H1 (cell line): ENCODE measurements at regions of chr10 and their contacts with region 1.

Region 1: DNA sequence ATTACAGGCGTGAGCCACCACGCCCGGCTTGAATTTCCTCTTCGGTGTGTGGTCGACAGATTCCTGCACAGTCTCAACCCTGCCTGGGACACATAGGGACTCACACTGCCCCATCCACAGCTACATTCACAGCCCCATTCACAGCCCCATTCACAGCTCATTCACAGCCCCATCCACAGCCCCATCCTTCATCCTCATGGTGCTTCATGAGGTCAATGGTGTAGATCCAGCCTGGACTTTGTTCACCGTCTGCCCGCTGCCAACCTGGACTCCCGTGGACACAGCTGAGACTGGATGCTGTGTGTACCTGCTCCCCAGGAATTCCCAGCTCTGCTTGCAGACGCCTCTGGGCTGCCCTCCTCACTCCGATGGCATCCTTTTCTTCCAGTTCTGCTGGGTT is 5.2 kb downstream of the IDI2 start:
- DNase-seq: no peak
- H3K4me3 ChIP-seq: no peak overlapping the region
- H3K27ac ChIP-seq: no peak overlapping the region
- H3K4me1 ChIP-seq: no peaks in the 10 kb centered on the region; a peak in 1 of 7 replicates
- H3K27me3 ChIP-seq: no peaks in the 10 kb centered on the region
- CTCF ChIP-seq: no peak
- EP300 ChIP-seq: no peak
- POLR2A ChIP-seq: no peak
- RAD21 ChIP-seq: no peak

Region 2: DNA sequence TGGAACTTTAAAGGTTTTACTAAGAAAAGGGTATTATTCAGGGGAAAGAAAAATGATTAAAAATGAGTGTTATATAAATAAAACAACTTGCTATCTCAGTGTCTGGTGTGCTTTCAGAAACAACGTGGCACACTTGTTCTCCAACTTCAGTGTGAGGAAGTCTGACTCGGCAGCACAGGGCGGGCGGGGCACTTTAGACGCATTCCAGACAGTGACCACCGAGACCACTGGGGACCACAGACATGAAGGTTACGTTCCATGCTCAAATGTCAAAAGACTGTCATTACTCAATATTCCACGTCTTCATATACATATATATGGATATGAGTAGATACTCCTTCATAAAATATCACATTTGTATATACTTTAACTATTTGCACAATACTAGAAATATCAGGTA is 175.9 kb before region 1 on chr10:
- CTCF ChIA-PET with region 1: no interaction called
- POLR2A ChIA-PET with region 1: no interaction called
- DNase-seq: no peak
- H3K4me3 ChIP-seq: no peak overlapping the region
- H3K27ac ChIP-seq: no peak overlapping the region
- H3K4me1 ChIP-seq: no peaks in the 10 kb centered on the region
- H3K27me3 ChIP-seq: no peaks in the 10 kb centered on the region
- CTCF ChIP-seq: no peak
- EP300 ChIP-seq: no peak
- POLR2A ChIP-seq: no peak
- RAD21 ChIP-seq: no peak

Region 3: DNA sequence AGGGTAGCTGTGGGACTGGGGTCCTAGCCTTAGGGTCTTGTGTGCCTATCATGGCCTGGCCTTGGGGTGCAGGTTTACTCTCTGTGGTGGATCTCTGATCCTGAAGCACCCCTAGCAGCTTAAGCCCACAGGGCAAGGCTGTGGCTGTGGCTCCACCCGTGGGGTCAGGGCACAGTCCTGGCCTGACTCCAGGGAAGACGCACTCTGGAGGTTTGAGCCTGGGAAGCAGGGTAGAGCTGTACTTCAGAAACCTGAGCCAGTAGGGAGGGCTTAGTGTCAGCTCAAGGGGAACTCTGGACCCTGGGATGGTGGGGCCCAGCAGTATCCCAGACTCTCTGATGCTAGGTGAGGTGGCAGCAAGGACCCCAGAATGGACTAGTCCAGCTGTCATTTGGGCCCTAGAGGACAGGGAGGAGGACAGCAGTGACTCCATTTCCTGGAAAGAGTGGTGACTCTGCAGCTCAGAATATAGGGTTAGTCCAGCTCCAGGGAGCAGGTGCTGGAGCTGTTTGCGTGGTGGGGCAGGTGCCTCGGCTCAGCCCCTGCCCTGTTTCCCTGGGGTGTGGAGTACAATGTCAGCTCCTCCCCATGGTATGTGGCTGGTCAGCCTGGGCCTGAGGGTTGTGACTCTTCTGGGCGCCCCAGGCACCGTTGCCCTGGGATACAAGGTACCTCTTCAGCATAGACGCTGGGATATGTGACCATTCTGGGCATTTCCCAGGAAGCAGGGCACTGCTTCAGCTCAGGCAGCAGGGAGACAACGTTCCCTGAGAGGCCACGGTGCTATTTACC is 16.4 kb before region 1 on chr10:
- CTCF ChIA-PET with region 1: no interaction called
- POLR2A ChIA-PET with region 1: interaction called, 10 read pairs
- DNase-seq: no peak
- H3K4me3 ChIP-seq: no peak overlapping the region
- H3K27ac ChIP-seq: no peak overlapping the region; the same call in 1 of the 2 replicates
- H3K4me1 ChIP-seq: no peaks in the 10 kb centered on the region
- H3K27me3 ChIP-seq: no peaks in the 10 kb centered on the region
- CTCF ChIP-seq: no peak
- EP300 ChIP-seq: no peak
- POLR2A ChIP-seq: no peak
- RAD21 ChIP-seq: no peak

Region 4: DNA sequence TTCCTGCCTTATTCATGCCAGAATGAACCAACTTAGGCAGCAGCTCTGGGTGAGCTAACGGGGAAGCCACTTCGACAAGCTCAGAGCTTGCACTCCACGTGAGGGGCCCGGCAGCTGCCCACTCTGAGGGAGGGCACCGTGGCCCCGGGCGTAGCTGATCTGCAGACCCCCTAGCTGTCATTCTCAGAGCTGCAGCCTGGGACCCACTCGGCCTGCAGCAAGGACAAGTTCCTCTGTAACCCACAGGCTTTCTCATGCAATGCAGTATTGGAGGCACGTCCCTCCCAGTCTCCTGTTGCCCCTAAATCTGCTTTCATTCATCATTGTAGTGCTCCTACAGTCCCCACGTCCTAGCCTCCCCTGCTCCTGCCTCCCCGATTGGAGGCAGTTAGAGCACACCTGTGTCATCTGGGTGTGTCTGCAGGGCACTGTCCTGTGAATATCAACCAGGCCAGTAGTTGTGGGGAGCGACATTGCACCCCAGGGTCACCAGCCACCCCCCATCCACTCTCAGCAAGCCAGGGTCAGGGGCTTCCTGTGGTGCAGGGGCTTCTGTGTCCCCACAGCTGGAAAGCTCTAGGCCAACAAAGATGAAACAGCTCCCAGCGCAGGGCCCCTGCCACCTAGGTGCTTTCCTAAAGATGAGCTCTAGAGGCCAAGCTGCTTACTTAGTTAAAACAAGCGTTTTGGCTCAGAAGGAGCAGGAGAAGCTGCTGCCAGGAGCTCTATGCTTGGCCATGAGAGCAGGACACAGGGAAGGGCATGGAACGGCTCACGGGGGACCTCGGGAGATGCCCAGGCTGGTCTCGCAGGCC is 383.3 kb after region 1 on chr10:
- CTCF ChIA-PET with region 1: no interaction called
- POLR2A ChIA-PET with region 1: no interaction called
- DNase-seq: peak in 1 of 2 experiments; percentile 72
- H3K4me3 ChIP-seq: no peak overlapping the region
- H3K27ac ChIP-seq: no peak overlapping the region
- H3K4me1 ChIP-seq: peaks cover 0 to 9% (median 0%) of the 10 kb centered on the region in 4 experiments; a peak in 2 of 7 replicates
- H3K27me3 ChIP-seq: no peaks in the 10 kb centered on the region; a peak in 2 of 7 replicates
- CTCF ChIP-seq: peak; percentile 63 to 81 (median 80)
- EP300 ChIP-seq: no peak
- POLR2A ChIP-seq: no peak
- RAD21 ChIP-seq: peak; percentile 45 to 61